Esophagus squamous epithelium (tissue), 5 donors: ENCODE measurements at regions of chr5 and their contacts with region 1.

Region 1: DNA sequence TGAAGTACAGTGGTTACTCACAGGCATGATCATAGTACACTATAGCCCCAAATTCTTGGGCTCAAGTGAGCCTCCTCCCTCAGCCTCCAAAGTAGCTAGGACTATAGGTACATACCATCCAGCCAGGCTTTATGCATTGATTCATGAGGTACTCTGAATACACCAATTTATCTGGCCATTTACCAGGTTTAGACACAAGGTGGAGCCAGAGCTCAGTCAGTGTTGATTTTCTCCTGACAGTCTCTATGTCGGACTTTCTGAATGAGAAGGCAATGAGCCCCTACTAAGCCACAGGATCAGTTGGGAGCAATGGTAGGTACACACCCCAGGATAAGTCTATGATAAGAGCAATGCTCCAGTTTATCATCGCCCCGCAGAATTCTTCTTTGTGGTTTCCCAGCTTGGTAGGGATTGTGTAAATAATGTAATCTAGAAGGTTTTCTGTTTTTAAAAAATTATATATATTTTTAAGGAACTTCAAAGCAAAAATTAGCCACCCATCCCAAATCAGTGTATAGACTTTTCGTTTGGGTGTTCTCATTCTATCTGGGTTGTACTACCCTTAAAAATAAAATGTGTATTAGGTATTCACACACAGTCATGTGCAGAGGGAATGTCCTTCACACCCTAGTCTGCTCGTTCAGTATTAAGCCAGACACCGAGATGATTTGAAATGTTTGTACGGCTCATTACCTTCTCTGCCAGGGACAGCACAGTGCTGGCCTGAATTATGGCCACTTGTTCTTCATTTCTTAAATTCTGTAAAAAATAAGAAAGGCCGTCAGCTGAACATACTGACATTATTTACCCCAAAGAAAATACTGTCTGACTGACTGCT is 118.4 kb upstream of the DPYSL3 start:
- DNase-seq: no peak
- H3K4me3 ChIP-seq: no peak overlapping the region
- H3K27ac ChIP-seq: no peak overlapping the region
- H3K4me1 ChIP-seq: no peaks in the 10 kb centered on the region
- H3K27me3 ChIP-seq: no peaks in the 10 kb centered on the region
- CTCF ChIP-seq: peak in 5 of 6 experiments; percentile 50 to 74 (median 62)
- POLR2A ChIP-seq: no peak

Region 2: DNA sequence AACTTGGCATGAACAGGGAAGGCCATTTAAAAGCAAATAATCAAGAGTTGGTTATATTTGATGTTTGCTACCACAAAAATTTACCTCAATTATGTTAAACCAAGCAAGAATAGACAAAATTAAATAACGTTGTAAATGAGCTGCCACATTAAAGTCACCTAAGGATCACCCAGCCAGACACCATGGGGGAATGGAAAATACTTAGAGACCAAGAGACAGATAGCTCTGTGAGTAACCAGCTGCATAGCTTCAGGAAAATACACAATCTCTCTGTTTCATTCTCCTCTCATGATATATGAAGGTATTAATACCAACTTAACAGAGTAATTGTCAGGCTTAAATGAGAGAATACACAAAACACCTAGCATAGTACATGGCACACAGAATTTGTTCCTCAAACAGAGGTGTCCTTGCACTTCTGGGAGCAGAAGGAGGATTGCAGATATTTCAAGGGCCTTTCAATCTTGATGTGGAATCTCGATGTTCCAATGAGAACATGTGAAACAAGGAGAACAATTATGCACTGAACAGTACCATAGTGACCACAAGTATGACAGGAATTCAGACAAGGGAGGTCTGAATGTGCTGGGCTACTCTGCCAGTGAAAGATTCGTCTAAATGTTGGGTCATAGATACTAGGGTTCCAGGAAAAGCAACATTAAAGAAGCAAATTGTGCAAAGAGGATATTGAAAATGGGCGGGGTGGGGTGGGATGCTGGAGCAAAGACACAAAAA is 135.7 kb after region 1 on chr5:
- intact Hi-C with region 1: no loop called
- DNase-seq: no peak
- H3K4me3 ChIP-seq: no peak overlapping the region
- H3K27ac ChIP-seq: no peak overlapping the region
- H3K4me1 ChIP-seq: no peaks in the 10 kb centered on the region
- H3K27me3 ChIP-seq: no peaks in the 10 kb centered on the region
- CTCF ChIP-seq: no peak
- POLR2A ChIP-seq: no peak

Region 3: DNA sequence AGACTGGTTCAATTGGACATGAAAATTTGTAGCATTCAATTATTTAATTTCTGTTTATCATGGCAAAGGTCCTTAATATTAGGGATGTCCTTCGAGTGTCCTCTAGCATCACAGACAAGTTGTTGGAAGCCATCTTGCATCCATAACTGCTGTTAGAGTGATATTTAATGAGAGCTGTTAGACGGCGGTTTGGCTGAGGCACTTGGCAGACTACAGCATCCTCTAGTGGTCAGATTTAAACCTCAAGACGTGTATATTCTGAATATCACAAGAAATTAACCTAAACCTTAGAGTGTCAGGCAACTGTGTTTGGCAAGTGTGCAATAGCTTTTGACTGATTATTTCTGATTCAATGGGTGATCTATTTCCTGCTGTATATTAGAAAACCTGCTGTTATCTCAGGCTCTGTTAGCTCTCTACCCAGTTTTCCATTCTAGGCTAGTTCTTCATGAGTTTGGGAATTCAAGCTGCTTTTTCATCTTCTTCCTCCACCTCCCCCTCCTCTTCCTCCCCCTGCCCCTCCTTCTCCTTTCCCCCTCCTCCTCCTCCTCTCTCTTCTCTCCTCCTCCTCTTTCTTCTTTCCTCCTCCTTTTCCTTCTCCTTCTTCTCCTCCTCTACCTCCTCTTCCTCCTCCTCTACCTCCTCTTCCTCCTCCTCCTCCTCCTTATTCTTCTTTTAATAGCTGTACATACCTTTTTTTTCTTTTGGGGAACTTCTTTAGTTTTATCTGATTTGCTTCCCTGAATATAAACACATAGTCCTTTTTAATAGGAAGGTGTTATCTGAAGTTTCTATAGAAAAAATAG is 194.6 kb after region 1 on chr5:
- intact Hi-C with region 1: loop called (anchors 5 kb)
- DNase-seq: no peak
- H3K4me3 ChIP-seq: no peak overlapping the region
- H3K27ac ChIP-seq: no peak overlapping the region
- H3K4me1 ChIP-seq: no peaks in the 10 kb centered on the region
- H3K27me3 ChIP-seq: peaks cover 0 to 10% (median 0%) of the 10 kb centered on the region in 4 donors
- CTCF ChIP-seq: peak; percentile 46 to 90 (median 82)
- POLR2A ChIP-seq: no peak

Region 4: DNA sequence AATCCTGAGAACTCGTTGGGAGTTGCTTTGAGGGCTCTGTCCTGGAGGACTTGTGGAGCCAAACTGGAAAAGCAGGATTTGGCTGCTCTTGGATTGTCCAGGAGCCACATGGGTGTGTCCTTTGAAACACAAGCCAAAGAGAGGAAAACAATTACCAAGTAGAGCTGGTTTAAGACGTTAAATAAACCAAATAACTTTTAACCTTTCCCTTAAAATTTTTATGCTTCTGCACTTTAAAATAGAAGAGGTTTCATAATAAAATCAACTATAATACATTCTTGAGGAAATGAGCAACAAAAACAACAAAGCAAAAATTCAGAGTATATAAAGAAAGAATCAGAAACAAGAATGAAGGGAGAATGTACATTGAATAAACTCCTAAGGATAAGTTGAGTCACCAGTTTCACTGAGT is 264.6 kb after region 1 on chr5:
- intact Hi-C with region 1: no loop called
- DNase-seq: no peak
- H3K4me3 ChIP-seq: no peak overlapping the region
- H3K27ac ChIP-seq: peak overlapping the region in 3 of 4 donors; percentile 56 to 74 (median 66)
- H3K4me1 ChIP-seq: peaks cover 9 to 33% (median 9%) of the 10 kb centered on the region in 3 donors
- H3K27me3 ChIP-seq: no peaks in the 10 kb centered on the region
- CTCF ChIP-seq: no peak
- POLR2A ChIP-seq: no peak